Activated CD4-positive, alpha-beta memory T cell treated with anti-CD3 and anti-CD28 coated beads for 36 hours (primary cell): ENCODE measurements at regions of chr22 and their contacts with region 1.

Region 1: GRCh38 chr22:41857155-41857859 is 24.4 kb downstream of the SREBF2 start:
- DNase-seq: peak; percentile 89
- H3K4me3 Mint-ChIP-seq: peak overlapping the region; percentile 28
- H3K27ac Mint-ChIP-seq: peak overlapping the region; percentile 95
- H3K4me1 Mint-ChIP-seq: peaks cover 80% of the 10 kb centered on the region
- H3K27me3 Mint-ChIP-seq: no peaks in the 10 kb centered on the region

Region 2: GRCh38 chr22:41746567-41747400 is 110.5 kb before region 1 on chr22:
- CTCF ChIA-PET with region 1: interaction called, 7 read pairs
- POLR2A ChIA-PET with region 1: interaction called, 3 read pairs
- intact Hi-C with region 1: loop called (anchors 5 kb)
- DNase-seq: peak; percentile 72
- H3K4me3 Mint-ChIP-seq: no peak overlapping the region
- H3K27ac Mint-ChIP-seq: no peak overlapping the region
- H3K4me1 Mint-ChIP-seq: peaks cover 6% of the 10 kb centered on the region
- H3K27me3 Mint-ChIP-seq: peaks cover 11% of the 10 kb centered on the region

Region 3: GRCh38 chr22:41800348-41801146 is 56.8 kb before region 1 on chr22 and contains the start of gene CCDC134:
- CTCF ChIA-PET with region 1: no interaction called
- POLR2A ChIA-PET with region 1: interaction called, 26 read pairs
- intact Hi-C with region 1: no loop called
- DNase-seq: peak; percentile 95
- H3K4me3 Mint-ChIP-seq: peak within 1 kb of the TSS; percentile 98
- H3K27ac Mint-ChIP-seq: peak within 1 kb of the TSS; percentile 95
- H3K4me1 Mint-ChIP-seq: peaks cover 35% of the 10 kb centered on the region
- H3K27me3 Mint-ChIP-seq: no peaks in the 10 kb centered on the region
- total RNA-seq, gene CCDC134: 16.1 to 17.6 TPM

Region 4: DNA sequence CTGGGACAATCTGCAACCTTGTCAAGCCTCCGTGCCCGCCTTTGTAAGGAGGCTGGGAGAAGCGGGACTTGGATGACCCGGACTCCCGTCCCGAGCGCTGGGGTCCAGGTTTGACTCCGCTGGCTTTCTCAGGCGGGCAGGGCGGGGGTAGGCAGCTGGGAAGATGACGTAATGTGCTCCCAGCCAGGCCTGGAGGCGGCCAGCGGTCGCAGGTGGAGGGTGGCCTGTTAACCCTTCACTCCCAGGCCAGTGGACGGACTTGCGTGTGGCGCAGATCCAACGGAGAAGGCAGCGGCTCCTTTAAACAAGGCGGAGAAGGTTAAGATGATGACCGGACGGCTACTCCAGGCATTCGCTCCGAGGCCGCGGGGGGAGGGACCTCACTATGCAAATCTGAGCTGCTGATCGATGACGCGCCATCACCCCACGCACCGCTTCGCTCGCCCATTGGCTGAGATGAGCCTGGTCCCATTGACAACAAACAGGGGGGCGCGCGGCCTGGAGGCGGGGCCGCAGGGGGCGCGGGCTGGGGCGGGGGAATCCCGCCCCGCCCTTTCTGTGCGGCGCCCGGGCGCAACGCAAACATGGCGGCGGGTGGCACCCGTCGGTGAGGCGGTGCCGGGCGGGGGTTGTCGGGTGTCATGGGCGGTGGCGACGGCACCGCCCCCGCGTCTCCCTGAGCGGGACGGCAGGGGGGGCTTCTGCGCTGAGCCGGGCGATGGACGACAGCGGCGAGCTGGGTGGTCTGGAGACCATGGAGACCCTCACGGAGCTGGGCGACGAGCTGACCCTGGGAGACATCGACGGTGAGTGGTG is 24.5 kb before region 1 on chr22 and contains the start of gene SREBF2:
- CTCF ChIA-PET with region 1: interaction called, 49 read pairs
- POLR2A ChIA-PET with region 1: interaction called, 66 read pairs
- intact Hi-C with region 1: loop called (anchors 1 kb)
- DNase-seq: peak; percentile 100
- H3K4me3 Mint-ChIP-seq: peak within 1 kb of the TSS; percentile 98
- H3K27ac Mint-ChIP-seq: peak within 1 kb of the TSS; percentile 99
- H3K4me1 Mint-ChIP-seq: peaks cover 44% of the 10 kb centered on the region
- H3K27me3 Mint-ChIP-seq: no peaks in the 10 kb centered on the region
- total RNA-seq, gene SREBF2: 131 to 137 TPM

Region 5: GRCh38 chr22:41873391-41873790 is 16.1 kb after region 1 on chr22:
- CTCF ChIA-PET with region 1: interaction called, 29 read pairs
- POLR2A ChIA-PET with region 1: interaction called, 69 read pairs
- intact Hi-C with region 1: loop called (anchors 1 kb)
- DNase-seq: peak; percentile 58
- H3K4me3 Mint-ChIP-seq: peak overlapping the region; percentile 58
- H3K27ac Mint-ChIP-seq: peak overlapping the region; percentile 92
- H3K4me1 Mint-ChIP-seq: peaks cover 61% of the 10 kb centered on the region
- H3K27me3 Mint-ChIP-seq: no peaks in the 10 kb centered on the region

Region 6: GRCh38 chr22:41913842-41914534 is 56.7 kb after region 1 on chr22:
- CTCF ChIA-PET with region 1: no interaction called
- POLR2A ChIA-PET with region 1: no interaction called
- intact Hi-C with region 1: no loop called
- DNase-seq: no peak
- H3K4me3 Mint-ChIP-seq: no peak overlapping the region
- H3K27ac Mint-ChIP-seq: no peak overlapping the region
- H3K4me1 Mint-ChIP-seq: peaks cover 28% of the 10 kb centered on the region
- H3K27me3 Mint-ChIP-seq: peaks cover 45% of the 10 kb centered on the region

Region 7: GRCh38 chr22:42353883-42354727 is 496.8 kb after region 1 on chr22:
- CTCF ChIA-PET with region 1: no interaction called
- POLR2A ChIA-PET with region 1: no interaction called
- intact Hi-C with region 1: no loop called
- DNase-seq: no peak
- H3K4me3 Mint-ChIP-seq: no peak overlapping the region
- H3K27ac Mint-ChIP-seq: no peak overlapping the region
- H3K4me1 Mint-ChIP-seq: no peaks in the 10 kb centered on the region
- H3K27me3 Mint-ChIP-seq: no peaks in the 10 kb centered on the region